HCT116 (cell line): ENCODE measurements at regions of chrX and their contacts with region 1.

Region 1: DNA sequence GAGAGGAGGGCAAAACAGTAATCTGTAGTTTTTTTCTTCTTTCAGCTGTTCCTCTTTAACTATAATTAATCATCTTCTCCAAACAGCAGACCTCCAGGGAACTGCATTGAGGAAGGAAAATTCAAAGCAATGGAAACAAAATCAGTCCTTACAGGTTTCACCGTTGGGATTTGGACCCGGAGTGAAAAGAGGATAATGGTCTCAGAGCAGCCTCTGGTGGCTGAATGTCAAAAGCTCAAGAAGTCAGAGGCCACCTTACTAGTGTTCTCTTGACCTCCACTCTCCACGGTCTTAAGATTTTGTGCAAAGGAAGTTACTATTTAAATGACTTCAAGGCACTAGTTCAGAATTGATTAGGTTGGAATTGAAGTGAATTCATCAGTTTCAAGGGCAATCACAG is 16.0 kb upstream of the MID1 start:
- DNase-seq: peak; percentile 59
- ATAC-seq: peak; percentile 48
- H3K4me3 ChIP-seq: 0 out of 4 replicates have a peak overlapping the region, but pooled peaks of 1 of the 2 experiments have one; percentile 26
- H3K27ac ChIP-seq: peak overlapping the region; percentile 93; the same call in 1 of the 2 replicates
- H3K4me1 ChIP-seq: peaks cover 38 to 51% of the 10 kb centered on the region in 2 experiments
- H3K27me3 ChIP-seq: no peaks in the 10 kb centered on the region
- CTCF ChIP-seq: peak; percentile 57 to 77 (median 65); a peak in 5 of 6 replicates
- POLR2A ChIP-seq: no peak
- RAD21 ChIP-seq: peak; percentile 88

Region 2: DNA sequence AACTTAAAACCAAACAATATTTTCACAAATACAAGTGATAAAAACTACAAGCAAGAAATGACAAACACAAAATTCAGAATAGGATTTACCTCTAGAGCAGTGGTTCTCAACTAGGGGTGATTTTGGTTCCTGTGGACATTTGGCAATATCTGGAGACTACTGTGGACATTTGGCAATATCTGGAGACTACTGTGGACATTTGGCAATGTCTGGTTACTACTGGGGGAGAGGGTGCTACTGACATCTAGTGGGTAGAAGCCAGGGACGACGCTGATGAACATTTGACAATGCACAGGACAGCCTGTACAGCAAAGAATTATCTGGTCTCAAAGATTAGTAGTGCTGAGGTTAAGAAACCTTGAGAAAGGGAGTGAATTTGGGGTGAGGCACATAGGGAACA is 309.8 kb before region 1 on chrX:
- CTCF ChIA-PET with region 1: no interaction called
- POLR2A ChIA-PET with region 1: no interaction called
- RAD21 ChIA-PET with region 1: no interaction called
- intact Hi-C with region 1: loop called (anchors 1 kb)
- DNase-seq: peak; percentile 22
- ATAC-seq: peak; percentile 87
- H3K4me3 ChIP-seq: no peak overlapping the region
- H3K27ac ChIP-seq: no peak overlapping the region
- H3K4me1 ChIP-seq: peaks cover 7 to 12% of the 10 kb centered on the region in 2 experiments; a peak in 3 of 4 replicates
- H3K27me3 ChIP-seq: no peaks in the 10 kb centered on the region
- CTCF ChIP-seq: peak; percentile 46 to 57 (median 57); a peak in 5 of 6 replicates
- POLR2A ChIP-seq: no peak
- RAD21 ChIP-seq: peak; percentile 67

Region 3: GRCh38 chrX:10579112-10580011 is 57.0 kb before region 1 on chrX:
- CTCF ChIA-PET with region 1: no interaction called
- POLR2A ChIA-PET with region 1: no interaction called
- RAD21 ChIA-PET with region 1: no interaction called
- intact Hi-C with region 1: loop called (anchors 5 kb)
- DNase-seq: peak; percentile 78
- ATAC-seq: peak; percentile 77
- H3K4me3 ChIP-seq: peak overlapping the region; percentile 11 to 46; a peak in 3 of 4 replicates
- H3K27ac ChIP-seq: peak overlapping the region; percentile 85
- H3K4me1 ChIP-seq: peaks cover 55 to 86% of the 10 kb centered on the region in 2 experiments
- H3K27me3 ChIP-seq: no peaks in the 10 kb centered on the region
- CTCF ChIP-seq: no peak
- POLR2A ChIP-seq: no peak
- RAD21 ChIP-seq: peak; percentile 1; the same call in 1 of the 2 replicates